PC-9 (cell line): ENCODE measurements at regions of chrX and their contacts with region 1.

Region 1: GRCh38 chrX:49165901-49166881 is 3.6 kb downstream of the MAGIX start:
- DNase-seq: no peak
- H3K4me3 ChIP-seq: no peak overlapping the region
- H3K27ac ChIP-seq: no peak overlapping the region
- H3K4me1 ChIP-seq: no peaks in the 10 kb centered on the region
- H3K27me3 ChIP-seq: no peaks in the 10 kb centered on the region
- CTCF ChIP-seq: no peak

Region 2: GRCh38 chrX:49147936-49148335 is 18.3 kb before region 1 on chrX:
- CTCF ChIA-PET with region 1: no interaction called
- POLR2A ChIA-PET with region 1: no interaction called
- intact Hi-C with region 1: no loop called
- DNase-seq: no peak
- H3K4me3 ChIP-seq: no peak overlapping the region
- H3K27ac ChIP-seq: no peak overlapping the region
- H3K4me1 ChIP-seq: no peaks in the 10 kb centered on the region
- H3K27me3 ChIP-seq: no peaks in the 10 kb centered on the region
- CTCF ChIP-seq: no peak

Region 3: DNA sequence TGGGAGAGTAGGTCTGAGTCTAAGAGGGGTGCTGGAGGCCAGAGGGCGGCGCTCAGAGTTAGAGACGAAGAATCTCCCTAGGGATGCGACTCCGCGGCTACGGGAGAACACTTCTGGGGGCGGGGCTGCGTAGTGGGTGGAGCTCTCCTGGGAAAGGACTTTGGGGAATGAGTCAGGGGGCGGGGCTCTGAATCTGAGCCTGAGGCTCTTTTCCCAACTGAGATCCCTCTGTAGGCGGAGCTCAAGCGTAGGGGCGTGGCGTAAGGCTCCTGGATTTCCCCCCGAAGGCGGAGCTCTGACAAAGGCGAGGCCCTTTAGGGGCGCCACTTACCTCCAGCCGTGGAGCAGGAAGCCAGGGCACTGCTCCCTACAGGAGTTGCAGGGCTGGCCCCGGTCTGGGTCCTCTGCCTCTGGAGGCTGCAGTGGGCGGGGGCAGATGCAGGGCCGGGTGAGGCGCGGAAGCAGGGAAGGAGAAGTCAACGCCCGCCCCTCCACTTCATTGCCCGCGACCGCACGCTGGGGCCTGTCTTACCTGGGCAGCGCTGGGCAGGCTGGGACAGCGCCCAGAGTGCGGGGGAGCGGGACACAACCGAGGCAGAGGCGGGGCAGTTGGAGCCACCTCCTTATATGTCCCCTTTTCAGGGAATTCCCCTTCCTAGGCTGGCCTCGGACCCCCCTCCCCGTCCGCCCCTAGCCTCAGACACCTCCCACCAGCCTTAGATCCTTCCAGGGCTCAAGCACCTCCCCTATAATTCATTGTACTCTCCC is 18.3 kb after region 1 on chrX:
- CTCF ChIA-PET with region 1: no interaction called
- POLR2A ChIA-PET with region 1: interaction called, 12 read pairs
- intact Hi-C with region 1: loop called (anchors 2 kb)
- DNase-seq: peak; percentile 73 to 87
- H3K4me3 ChIP-seq: peak overlapping the region; percentile 56; the same call in 1 of the 2 replicates
- H3K27ac ChIP-seq: no peak overlapping the region
- H3K4me1 ChIP-seq: no peaks in the 10 kb centered on the region
- H3K27me3 ChIP-seq: no peaks in the 10 kb centered on the region
- CTCF ChIP-seq: no peak

Region 4: GRCh38 chrX:49282647-49283011 is 116.4 kb after region 1 on chrX:
- CTCF ChIA-PET with region 1: no interaction called
- POLR2A ChIA-PET with region 1: no interaction called
- intact Hi-C with region 1: no loop called
- DNase-seq: no peak
- H3K4me3 ChIP-seq: no peak overlapping the region
- H3K27ac ChIP-seq: no peak overlapping the region
- H3K4me1 ChIP-seq: no peaks in the 10 kb centered on the region
- H3K27me3 ChIP-seq: no peaks in the 10 kb centered on the region
- CTCF ChIP-seq: no peak

Region 5: GRCh38 chrX:50333308-50333707 is 1167.1 kb after region 1 on chrX:
- CTCF ChIA-PET with region 1: no interaction called
- POLR2A ChIA-PET with region 1: no interaction called
- intact Hi-C with region 1: no loop called
- DNase-seq: no peak
- H3K4me3 ChIP-seq: no peak overlapping the region
- H3K27ac ChIP-seq: no peak overlapping the region
- H3K4me1 ChIP-seq: no peaks in the 10 kb centered on the region
- H3K27me3 ChIP-seq: no peaks in the 10 kb centered on the region
- CTCF ChIP-seq: no peak